AG04450 (cell line): ENCODE measurements at regions of chr20 and their contacts with region 1.

Region 1: DNA sequence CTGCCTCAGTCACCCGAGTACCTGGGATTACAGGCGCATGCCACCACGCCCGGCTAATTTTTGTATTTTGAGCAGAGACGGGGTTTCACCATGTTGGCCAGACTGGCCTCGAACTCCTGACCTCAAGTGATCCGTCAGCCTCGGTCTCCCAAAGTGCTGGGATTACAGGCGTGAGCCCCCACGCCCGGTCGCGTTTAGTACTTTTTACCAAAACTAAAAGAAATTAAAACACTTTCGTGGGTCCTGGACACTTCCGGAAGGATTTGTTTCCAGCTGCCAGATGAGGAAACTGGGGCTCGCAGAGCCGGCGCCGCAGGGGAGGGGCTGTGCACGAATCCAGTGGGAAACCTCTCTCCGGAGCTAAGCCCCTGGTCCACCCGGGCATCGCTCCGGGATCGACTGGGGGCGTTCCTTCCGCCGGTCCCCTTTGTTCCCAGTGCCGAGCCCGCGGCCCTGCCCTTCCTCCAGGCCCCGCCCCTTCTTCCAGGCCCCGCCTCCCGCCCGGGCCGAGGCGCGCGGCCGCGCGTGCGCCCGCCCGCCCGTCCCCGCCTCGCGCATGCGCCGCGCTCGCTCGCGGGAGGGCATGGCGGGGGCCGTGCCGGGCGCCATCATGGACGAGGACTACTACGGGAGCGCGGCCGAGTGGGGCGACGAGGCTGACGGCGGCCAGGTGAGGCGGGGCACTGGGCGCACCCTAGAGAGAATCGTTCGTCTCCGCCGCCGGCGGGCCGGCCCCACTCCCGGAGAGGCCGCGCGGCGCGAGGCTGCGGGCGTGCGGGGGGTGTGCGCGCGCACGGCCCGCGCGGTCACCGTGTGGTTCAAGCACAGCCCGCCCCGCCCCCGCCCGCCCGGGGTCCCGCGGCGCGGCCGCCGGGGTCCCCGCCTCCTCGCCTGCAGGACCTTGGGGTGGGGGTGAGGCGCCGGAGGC is at the start of gene NELFCD:
- DNase-seq: peak; percentile 33
- H3K4me3 ChIP-seq: peak within 1 kb of the TSS; percentile 84
- H3K27ac ChIP-seq: no peak within 1 kb of the TSS
- H3K27me3 ChIP-seq: peaks cover 3% of the 10 kb centered on the region
- CTCF ChIP-seq: no peak
- polyA plus RNA-seq, gene NELFCD: 69.6 and 79.9 TPM in 2 replicates

Region 2: DNA sequence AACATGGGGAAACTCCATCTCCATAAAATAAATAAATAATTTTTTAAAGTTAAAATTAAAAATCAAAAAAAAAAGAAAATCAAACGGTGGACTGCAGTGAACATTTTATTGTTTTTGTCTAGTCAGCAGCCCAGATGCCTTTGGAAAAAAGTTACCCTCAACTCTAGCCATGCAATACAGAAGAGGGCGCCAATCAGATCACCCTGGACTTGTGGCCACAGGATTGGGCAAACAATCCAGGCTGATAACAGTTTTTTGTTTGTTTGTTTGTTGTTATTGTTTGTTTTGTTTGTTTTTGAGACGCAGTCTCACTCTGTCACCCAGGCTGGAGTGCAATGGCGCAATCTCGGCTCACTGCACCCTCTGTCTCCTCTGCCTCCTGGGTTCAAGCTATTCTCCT is 30.4 kb before region 1 on chr20:
- CTCF ChIA-PET with region 1: no interaction called
- POLR2A ChIA-PET with region 1: no interaction called
- DNase-seq: no peak
- H3K4me3 ChIP-seq: no peak overlapping the region
- H3K27ac ChIP-seq: no peak overlapping the region
- H3K27me3 ChIP-seq: peaks cover 4% of the 10 kb centered on the region
- CTCF ChIP-seq: no peak

Region 3: GRCh38 chr20:58991715-58992114 is 10.8 kb after region 1 on chr20:
- CTCF ChIA-PET with region 1: no interaction called
- POLR2A ChIA-PET with region 1: interaction called, 11 read pairs
- DNase-seq: no peak
- H3K4me3 ChIP-seq: no peak overlapping the region
- H3K27ac ChIP-seq: no peak overlapping the region
- H3K27me3 ChIP-seq: no peaks in the 10 kb centered on the region
- CTCF ChIP-seq: no peak